Activated CD4-positive, alpha-beta T cell treated with anti-CD3 and anti-CD28 coated beads, Interleukin-2, amount 10 ng/mL, durations not matched to agents 7 days and 5 days (primary cell): ENCODE measurements at regions of chr16 and their contacts with region 1.

Region 1: GRCh38 chr16:30844671-30845449 is 49.0 kb downstream of the BCL7C start:
- DNase-seq: peak; percentile 95
- H3K4me3 Mint-ChIP-seq: peak overlapping the region; percentile 17
- H3K27ac Mint-ChIP-seq: peak overlapping the region; percentile 88
- H3K4me1 Mint-ChIP-seq: peaks cover 10% of the 10 kb centered on the region
- H3K27me3 Mint-ChIP-seq: no peaks in the 10 kb centered on the region

Region 2: GRCh38 chr16:30747799-30748634 is 96.8 kb before region 1 on chr16 and contains the start of gene PHKG2:
- CTCF ChIA-PET with region 1: no interaction called
- POLR2A ChIA-PET with region 1: no interaction called
- DNase-seq: peak; percentile 99
- H3K4me3 Mint-ChIP-seq: peak within 1 kb of the TSS; percentile 90
- H3K27ac Mint-ChIP-seq: peak within 1 kb of the TSS; percentile 86
- H3K4me1 Mint-ChIP-seq: peaks cover 31% of the 10 kb centered on the region
- H3K27me3 Mint-ChIP-seq: no peaks in the 10 kb centered on the region
- total RNA-seq, gene PHKG2: 41.1 to 43.4 TPM

Region 3: DNA sequence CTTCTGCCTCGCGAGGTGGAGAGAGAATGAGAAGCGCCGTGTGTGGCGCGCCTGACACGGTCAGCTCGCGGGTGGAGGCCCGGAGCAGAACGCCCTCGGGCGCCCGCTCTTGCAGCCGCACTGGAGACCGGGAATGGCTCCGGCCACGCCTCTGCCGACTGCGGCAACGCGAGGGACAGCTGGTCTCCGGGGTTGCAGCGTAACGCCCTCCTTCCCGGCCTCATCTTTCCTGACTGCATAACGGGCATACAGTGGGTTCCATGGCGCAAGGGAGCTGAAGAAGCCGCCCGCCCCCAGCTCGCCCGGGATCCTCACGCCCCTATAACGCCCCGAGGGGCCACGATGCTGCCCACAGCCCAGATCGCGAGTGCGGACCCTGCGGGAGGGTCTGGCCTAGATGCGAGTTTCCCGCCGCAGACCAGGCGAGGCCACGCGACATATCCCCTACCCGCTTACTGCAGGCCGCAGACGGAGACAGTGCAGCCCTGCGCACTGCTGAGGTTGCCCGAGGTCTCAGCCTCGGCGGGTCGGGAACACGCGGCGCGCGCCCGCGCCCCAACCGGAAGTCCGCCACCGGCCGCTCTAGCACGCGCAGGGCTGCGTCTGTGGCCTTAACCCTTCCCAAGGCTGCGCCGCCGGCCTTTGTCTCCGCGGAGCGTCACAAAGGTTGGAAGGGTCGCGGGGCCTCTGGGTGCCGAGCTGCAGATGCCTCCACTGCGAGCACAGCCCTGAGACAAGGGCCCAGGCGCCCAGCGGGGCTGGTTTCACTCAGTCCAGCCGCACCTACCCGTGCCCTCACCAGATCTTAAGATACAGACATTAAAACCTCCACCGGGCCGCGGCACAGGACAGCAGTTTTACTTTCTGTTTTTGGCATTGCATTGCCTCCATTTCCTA is 30.2 kb after region 1 on chr16:
- CTCF ChIA-PET with region 1: interaction called, 23 read pairs
- POLR2A ChIA-PET with region 1: interaction called, 6 read pairs
- DNase-seq: peak; percentile 87
- H3K4me3 Mint-ChIP-seq: peak overlapping the region; percentile 94
- H3K27ac Mint-ChIP-seq: peak overlapping the region; percentile 98
- H3K4me1 Mint-ChIP-seq: peaks cover 30% of the 10 kb centered on the region
- H3K27me3 Mint-ChIP-seq: no peaks in the 10 kb centered on the region

Region 4: DNA sequence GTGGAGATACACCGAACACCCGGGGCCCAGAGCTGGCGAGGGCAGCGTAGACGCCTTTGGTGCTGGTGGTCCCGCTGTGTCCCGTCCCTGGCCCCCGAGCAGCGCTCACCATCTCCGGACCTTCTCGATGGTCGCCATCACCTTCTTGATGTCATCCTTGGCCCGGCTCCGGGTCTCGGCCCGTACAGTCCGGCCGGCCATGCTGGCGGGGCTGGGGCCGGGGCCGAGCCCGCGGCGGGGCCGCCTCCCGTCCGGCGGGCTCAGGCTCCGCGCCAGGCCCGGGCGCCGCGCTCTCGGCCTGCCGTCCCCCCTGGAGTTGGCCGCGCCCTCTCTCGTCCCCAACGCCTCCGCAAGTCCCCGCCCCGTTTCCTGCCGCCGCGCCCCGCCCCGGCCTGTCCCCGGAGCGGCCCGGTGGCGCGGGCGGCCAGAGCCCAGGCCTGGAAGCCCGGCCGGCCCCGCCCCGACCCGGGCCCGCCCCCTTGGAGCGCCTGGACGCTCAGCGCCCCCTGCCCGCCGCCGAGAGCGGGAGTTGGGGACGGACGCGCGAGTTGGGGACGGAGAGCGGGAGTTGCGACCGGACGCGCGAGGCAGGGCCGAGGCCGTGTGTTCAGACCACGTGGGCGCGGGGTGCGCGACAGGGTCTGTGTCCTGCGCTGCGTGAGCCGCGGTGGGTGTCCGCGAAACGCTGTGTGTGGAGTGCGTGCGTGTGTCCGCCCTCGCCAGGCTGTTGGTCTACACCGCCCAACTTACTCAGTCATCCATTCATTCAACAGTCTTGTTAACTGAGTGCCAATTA is 49.1 kb after region 1 on chr16 and contains the start of gene BCL7C:
- CTCF ChIA-PET with region 1: interaction called, 21 read pairs
- POLR2A ChIA-PET with region 1: no interaction called
- DNase-seq: peak; percentile 83
- H3K4me3 Mint-ChIP-seq: peak within 1 kb of the TSS; percentile 81
- H3K27ac Mint-ChIP-seq: peak within 1 kb of the TSS; percentile 90
- H3K4me1 Mint-ChIP-seq: peaks cover 52% of the 10 kb centered on the region
- H3K27me3 Mint-ChIP-seq: no peaks in the 10 kb centered on the region
- total RNA-seq, gene BCL7C: 21.8 to 22.1 TPM

Region 5: GRCh38 chr16:30914830-30915229 is 70.0 kb after region 1 on chr16:
- CTCF ChIA-PET with region 1: interaction called, 30 read pairs
- POLR2A ChIA-PET with region 1: no interaction called
- DNase-seq: no peak
- H3K4me3 Mint-ChIP-seq: no peak overlapping the region
- H3K27ac Mint-ChIP-seq: no peak overlapping the region
- H3K4me1 Mint-ChIP-seq: no peaks in the 10 kb centered on the region
- H3K27me3 Mint-ChIP-seq: no peaks in the 10 kb centered on the region

Region 6: GRCh38 chr16:30920891-30921290 is 76.0 kb after region 1 on chr16:
- CTCF ChIA-PET with region 1: interaction called, 30 read pairs
- POLR2A ChIA-PET with region 1: no interaction called
- DNase-seq: no peak
- H3K4me3 Mint-ChIP-seq: peak overlapping the region; percentile 88
- H3K27ac Mint-ChIP-seq: no peak overlapping the region
- H3K4me1 Mint-ChIP-seq: peaks cover 20% of the 10 kb centered on the region
- H3K27me3 Mint-ChIP-seq: no peaks in the 10 kb centered on the region

Region 7: GRCh38 chr16:30941600-30942425 is 97.0 kb after region 1 on chr16:
- CTCF ChIA-PET with region 1: interaction called, 21 read pairs
- POLR2A ChIA-PET with region 1: no interaction called
- DNase-seq: peak; percentile 74
- H3K4me3 Mint-ChIP-seq: peak overlapping the region; percentile 51
- H3K27ac Mint-ChIP-seq: peak overlapping the region; percentile 72
- H3K4me1 Mint-ChIP-seq: peaks cover 34% of the 10 kb centered on the region
- H3K27me3 Mint-ChIP-seq: no peaks in the 10 kb centered on the region